HEK293 (cell line): ENCODE measurements at regions of chr12 and their contacts with region 1.

Region 1: GRCh38 chr12:42482445-42483237 is 106.9 kb downstream of the PRICKLE1 start:
- H3K4me3 ChIP-seq: peak overlapping the region; percentile 85
- H3K27ac ChIP-seq: peak overlapping the region; percentile 85; the same call in 1 of the 2 replicates
- H3K4me1 ChIP-seq: peaks cover 11% of the 10 kb centered on the region
- CTCF ChIP-seq: peak; percentile 95

Region 2: DNA sequence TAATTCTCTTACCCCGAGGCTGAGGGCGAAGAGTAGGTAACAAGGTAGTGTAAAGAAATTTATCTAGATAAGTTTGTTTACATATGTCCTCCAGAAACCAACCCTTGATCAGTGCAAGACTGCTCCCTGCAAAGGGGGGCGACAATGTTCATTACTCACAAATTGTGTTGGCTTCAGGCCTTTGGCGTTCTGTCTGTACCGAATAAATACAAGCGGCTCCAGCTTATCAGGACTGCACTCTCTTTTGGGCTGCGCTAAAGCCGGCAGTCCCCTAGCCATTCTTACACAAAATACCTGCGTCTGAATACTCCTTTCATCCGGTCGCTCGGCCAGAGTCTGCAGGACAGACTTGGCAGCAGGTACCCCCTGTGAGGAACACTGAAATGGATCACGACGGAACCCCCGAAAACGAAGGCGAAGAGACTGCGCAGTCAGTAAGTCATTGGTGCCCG is 40.3 kb before region 1 on chr12:
- CTCF ChIA-PET with region 1: no interaction called
- POLR2A ChIA-PET with region 1: no interaction called
- H3K4me3 ChIP-seq: no peak overlapping the region
- H3K27ac ChIP-seq: no peak overlapping the region
- H3K4me1 ChIP-seq: peaks cover 5% of the 10 kb centered on the region
- CTCF ChIP-seq: no peak

Region 3: DNA sequence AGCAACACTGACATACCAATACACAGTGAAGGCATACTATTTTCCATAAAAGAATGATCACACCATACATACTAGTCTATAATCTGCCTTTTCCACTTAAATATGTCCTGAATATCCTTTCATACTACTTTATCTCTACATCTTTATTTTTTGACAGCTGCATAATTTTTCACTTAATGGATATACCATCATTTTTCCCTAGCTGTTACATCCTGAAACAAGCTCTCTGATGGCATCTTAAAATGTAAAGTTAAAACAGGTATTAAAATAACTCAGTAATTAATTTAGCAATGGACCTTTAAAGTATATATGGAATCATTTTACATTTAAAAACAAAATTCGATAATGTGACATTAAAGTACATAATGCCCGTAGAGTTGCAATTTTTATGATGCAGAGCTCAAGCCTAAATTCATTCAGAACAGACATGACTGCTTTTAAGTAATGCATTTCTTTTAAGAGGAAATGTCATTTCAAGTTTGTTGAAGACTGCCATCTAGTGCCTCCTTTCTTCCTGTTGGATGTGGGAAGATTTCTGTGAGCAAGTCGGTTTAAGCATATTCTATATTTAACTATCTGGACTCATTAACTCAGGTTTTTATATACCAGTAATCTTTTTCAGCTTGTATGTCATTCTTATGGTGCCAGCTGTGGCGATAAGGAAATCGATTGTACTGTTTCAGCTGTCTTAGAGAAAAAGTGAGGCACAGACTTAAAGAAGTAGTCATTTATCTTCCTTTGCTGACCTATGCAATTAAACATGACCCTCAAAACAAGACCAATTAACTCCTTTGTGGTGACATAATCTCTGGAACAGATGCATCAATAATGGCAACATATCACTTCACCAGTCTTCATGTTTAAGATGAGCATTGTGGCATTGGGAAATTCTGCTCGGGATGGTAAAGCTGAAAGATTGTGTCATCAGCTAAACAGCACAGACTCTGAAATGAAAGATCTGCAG is 86.6 kb after region 1 on chr12:
- CTCF ChIA-PET with region 1: interaction called, 17 read pairs
- POLR2A ChIA-PET with region 1: interaction called, 4 read pairs
- H3K4me3 ChIP-seq: no peak overlapping the region
- H3K27ac ChIP-seq: no peak overlapping the region; the same call in 1 of the 2 replicates
- H3K4me1 ChIP-seq: peaks cover 7% of the 10 kb centered on the region
- CTCF ChIP-seq: no peak

Region 4: GRCh38 chr12:42589465-42590329 is 107.1 kb after region 1 on chr12 and contains the start of gene PRICKLE1:
- CTCF ChIA-PET with region 1: interaction called, 4 read pairs
- POLR2A ChIA-PET with region 1: interaction called, 10 read pairs
- H3K4me3 ChIP-seq: peak within 1 kb of the TSS; percentile 94
- H3K27ac ChIP-seq: peak within 1 kb of the TSS; percentile 97
- H3K4me1 ChIP-seq: peaks cover 19% of the 10 kb centered on the region
- CTCF ChIP-seq: no peak

Region 5: DNA sequence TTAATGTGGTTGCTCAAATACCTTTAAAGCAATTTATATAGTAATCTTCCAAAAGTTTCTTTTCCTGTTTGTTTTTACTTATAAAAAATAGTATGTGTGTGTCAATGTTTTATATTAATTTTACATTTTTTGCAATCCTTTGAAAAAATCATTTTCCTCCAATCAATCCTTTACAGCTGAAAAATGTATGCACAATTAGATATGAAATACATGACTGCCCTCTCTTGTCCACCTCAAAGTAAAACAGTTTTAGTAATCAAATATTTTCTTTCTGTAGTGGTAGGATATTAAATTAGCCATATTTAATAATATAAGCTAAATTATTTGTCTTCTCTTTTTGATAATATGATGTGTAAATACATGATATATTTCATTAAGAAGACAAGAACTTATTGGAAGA is 799.5 kb after region 1 on chr12:
- CTCF ChIA-PET with region 1: interaction called, 26 read pairs
- POLR2A ChIA-PET with region 1: interaction called, 3 read pairs
- H3K4me3 ChIP-seq: no peak overlapping the region
- H3K27ac ChIP-seq: no peak overlapping the region
- H3K4me1 ChIP-seq: no peaks in the 10 kb centered on the region; the same call in 1 of the 2 replicates
- CTCF ChIP-seq: peak; percentile 19; the same call in 1 of the 2 replicates